Right ventricle myocardium superior (tissue), 1 donor: ENCODE measurements at regions of chr13 and their contacts with region 1.

Region 1: GRCh38 chr13:21014502-21015170 is 46.8 kb downstream of the LATS2 start:
- DNase-seq: peak; percentile 75
- ATAC-seq: peak; percentile 61

Region 2: GRCh38 chr13:21060987-21061763 is 46.5 kb after region 1 on chr13 and contains the start of gene LATS2:
- intact Hi-C with region 1: loop called (anchors 10 kb)
- DNase-seq: peak; percentile 99
- ATAC-seq: peak; percentile 96
- total RNA-seq, gene LATS2: 22.5 TPM